OCI-LY7 (cell line): ENCODE measurements at regions of chr12 and their contacts with region 1.

Region 1: GRCh38 chr12:14167005-14167628 is 185.7 kb upstream of the GRIN2B start:
- DNase-seq: peak; percentile 72
- H3K4me3 ChIP-seq: no peak overlapping the region
- H3K27ac ChIP-seq: no peak overlapping the region
- H3K4me1 ChIP-seq: peaks cover 38% of the 10 kb centered on the region
- CTCF ChIP-seq: peak; percentile 100

Region 2: DNA sequence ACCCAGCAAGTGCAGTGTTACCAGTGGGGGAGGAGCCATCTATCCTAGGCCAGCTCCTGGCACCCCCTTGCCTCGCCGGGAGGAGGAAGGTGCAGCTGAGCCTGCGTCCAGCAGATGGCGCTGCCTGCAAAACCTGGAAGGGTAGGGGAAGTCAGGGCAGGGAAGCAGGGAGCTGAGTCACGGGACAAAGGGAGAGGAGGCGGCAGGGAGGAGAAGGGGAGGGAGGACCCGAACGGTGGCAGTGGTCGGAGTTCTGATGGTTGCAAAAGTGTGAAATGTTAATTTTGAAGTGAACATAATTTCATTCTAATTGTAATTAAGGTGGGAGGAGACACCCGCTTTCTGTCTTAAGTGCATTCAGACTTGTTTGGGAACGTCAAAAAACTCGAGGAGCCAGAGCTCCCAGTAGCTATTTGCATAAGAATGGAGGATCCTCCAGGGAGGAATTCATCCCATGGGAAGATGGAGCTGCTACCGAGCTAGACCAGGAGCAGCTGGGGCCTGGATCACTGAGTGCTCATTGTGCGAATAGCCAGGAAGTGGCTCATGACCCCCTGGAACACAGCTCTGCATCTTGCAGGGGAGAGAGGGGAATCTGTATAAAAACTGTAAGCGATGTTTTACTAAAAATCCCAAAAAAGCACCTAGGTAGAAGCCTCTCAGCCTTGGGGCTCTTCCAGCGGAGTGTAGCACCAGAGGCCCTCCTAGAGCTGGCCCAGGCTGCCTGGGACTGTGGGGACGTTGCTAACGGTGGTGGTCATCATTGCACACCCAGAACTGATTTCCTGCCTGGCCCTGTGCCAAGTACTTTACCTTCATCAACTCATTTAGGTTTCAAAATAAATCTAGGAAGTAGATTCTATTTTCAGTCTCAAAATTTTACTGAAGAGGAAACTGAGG is 911.1 kb before region 1 on chr12:
- CTCF ChIA-PET with region 1: no interaction called
- POLR2A ChIA-PET with region 1: no interaction called
- intact Hi-C with region 1: loop called (anchors 5 kb)
- DNase-seq: peak; percentile 68
- H3K4me3 ChIP-seq: no peak overlapping the region
- H3K27ac ChIP-seq: no peak overlapping the region
- H3K4me1 ChIP-seq: no peaks in the 10 kb centered on the region
- CTCF ChIP-seq: peak; percentile 93

Region 3: GRCh38 chr12:13534645-13535398 is 632.3 kb before region 1 on chr12:
- CTCF ChIA-PET with region 1: no interaction called
- POLR2A ChIA-PET with region 1: no interaction called
- intact Hi-C with region 1: loop called (anchors 10 kb)
- DNase-seq: peak; percentile 47
- H3K4me3 ChIP-seq: no peak overlapping the region
- H3K27ac ChIP-seq: no peak overlapping the region
- H3K4me1 ChIP-seq: no peaks in the 10 kb centered on the region
- CTCF ChIP-seq: peak; percentile 87

Region 4: GRCh38 chr12:13864081-13864673 is 302.9 kb before region 1 on chr12:
- CTCF ChIA-PET with region 1: interaction called, 9 read pairs
- POLR2A ChIA-PET with region 1: no interaction called
- intact Hi-C with region 1: loop called (anchors 1 kb)
- DNase-seq: peak; percentile 80
- H3K4me3 ChIP-seq: no peak overlapping the region
- H3K27ac ChIP-seq: no peak overlapping the region
- H3K4me1 ChIP-seq: no peaks in the 10 kb centered on the region
- CTCF ChIP-seq: peak; percentile 97

Region 5: DNA sequence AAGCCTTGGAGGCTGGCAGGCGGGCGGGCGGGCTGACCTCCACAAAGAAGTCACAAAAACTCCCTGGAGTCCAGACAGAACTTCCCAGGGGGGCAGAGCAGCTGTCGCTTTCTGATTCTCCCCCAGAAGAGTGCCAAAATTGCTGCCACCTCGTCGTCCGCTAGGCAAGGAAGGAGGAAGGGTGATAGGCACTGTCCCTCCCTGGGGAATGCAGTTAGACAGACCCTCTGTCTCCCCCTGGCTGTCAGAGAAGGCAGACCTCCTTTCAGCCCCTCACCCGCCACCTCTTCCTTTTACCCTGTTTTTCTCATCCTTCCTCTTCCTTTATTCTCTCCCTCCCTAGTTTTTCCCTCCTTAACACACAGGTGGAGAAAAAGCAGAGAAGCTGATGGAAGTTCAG is 204.4 kb before region 1 on chr12:
- CTCF ChIA-PET with region 1: no interaction called
- POLR2A ChIA-PET with region 1: no interaction called
- intact Hi-C with region 1: loop called (anchors 5 kb)
- DNase-seq: peak; percentile 37
- H3K4me3 ChIP-seq: no peak overlapping the region
- H3K27ac ChIP-seq: no peak overlapping the region
- H3K4me1 ChIP-seq: no peaks in the 10 kb centered on the region
- CTCF ChIP-seq: peak; percentile 66

Region 6: DNA sequence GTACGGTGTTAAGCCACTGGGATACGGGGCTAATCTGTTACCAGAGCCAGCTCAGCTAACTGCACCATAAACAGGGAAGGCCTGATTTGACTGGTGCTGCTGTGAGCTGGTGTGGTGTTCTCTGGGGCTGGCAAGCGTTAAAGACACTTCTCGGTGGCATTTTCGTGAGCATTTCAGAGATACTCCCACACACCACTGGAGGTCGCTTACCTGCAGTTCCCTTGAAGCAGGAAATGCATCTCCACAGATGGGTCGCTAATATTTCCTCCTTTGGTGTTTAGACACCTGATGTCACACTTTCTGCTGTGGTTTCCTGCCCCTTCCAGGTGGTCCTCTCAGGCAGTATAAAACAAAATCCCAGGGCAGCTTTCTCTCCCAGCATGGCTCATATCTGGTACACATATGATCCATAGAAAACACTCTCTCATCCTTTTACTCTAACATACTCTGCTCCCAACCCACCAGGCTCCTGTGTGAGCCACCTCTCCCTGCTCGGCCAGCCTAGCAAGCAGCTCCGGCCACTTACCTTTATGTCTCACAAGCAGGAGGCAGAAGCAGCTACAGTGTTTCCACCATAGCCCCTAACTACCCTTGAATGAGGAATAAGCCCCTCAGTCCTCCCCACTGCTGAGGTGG is 55.8 kb before region 1 on chr12:
- CTCF ChIA-PET with region 1: interaction called, 19 read pairs
- POLR2A ChIA-PET with region 1: interaction called, 28 read pairs
- intact Hi-C with region 1: loop called (anchors 1 kb)
- DNase-seq: peak; percentile 96
- H3K4me3 ChIP-seq: peak overlapping the region; percentile 21
- H3K27ac ChIP-seq: peak overlapping the region; percentile 65
- H3K4me1 ChIP-seq: peaks cover 33% of the 10 kb centered on the region
- CTCF ChIP-seq: peak; percentile 89

Region 7: GRCh38 chr12:14442221-14442881 is 275.2 kb after region 1 on chr12:
- CTCF ChIA-PET with region 1: no interaction called
- POLR2A ChIA-PET with region 1: no interaction called
- intact Hi-C with region 1: no loop called
- DNase-seq: no peak
- H3K4me3 ChIP-seq: no peak overlapping the region
- H3K27ac ChIP-seq: no peak overlapping the region
- H3K4me1 ChIP-seq: no peaks in the 10 kb centered on the region
- CTCF ChIP-seq: no peak